ENCODE measurements at regions of chr7 and their contacts with region 1.

Region 1: DNA sequence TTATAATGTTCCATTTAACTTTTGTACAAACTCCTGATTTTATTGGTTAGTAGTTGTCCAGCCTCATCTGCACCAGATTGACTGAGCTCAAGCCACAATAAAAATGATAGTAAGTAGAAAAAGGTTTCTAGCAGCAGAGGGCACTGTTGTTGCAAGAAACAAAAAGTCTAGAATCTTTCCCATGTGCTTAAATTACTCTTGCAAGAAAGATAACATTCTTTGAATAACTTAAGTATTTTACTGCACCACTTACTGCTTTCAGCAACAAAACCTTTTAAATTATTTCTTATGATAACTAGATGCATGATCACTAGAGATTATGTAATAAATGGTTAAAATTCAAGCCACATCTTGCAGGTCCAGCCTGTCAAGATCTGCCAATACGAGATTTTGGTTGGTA is 27.0 kb downstream of the LMOD2 start:
- DNase-seq: peak; percentile 36
- H3K4me3 ChIP-seq: no peak overlapping the region
- H3K27ac ChIP-seq: no peak overlapping the region
- H3K4me1 ChIP-seq: no peaks in the 10 kb centered on the region
- H3K27me3 ChIP-seq: no peaks in the 10 kb centered on the region
- CTCF ChIP-seq: peak; percentile 48

Region 2: DNA sequence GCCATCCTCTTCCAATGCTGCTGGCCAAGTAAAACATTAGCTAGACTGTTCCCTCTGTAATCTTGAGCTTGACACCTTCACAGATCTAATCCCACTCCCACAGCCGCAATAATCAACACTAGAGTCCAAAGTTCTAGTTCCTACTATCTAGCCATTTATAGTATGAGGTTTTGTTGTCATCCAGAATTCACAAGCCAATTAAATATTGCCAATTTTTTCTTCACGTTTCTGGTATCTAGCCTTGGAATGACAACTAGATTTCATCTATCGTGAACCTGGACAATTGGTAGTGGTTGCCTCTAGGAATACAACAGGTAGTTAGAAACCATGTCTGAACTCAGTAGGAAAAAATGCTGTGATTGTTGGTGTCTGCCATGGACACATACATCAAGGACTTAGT is 55.7 kb after region 1 on chr7:
- intact Hi-C with region 1: loop called (anchors 10 kb)
- DNase-seq: peak; percentile 51
- H3K4me3 ChIP-seq: no peak overlapping the region
- H3K27ac ChIP-seq: peak overlapping the region; percentile 3
- H3K4me1 ChIP-seq: peaks cover 8% of the 10 kb centered on the region
- H3K27me3 ChIP-seq: no peaks in the 10 kb centered on the region
- CTCF ChIP-seq: no peak